ENCODE measurements at regions of chr17 and their contacts with region 1.

Region 1: DNA sequence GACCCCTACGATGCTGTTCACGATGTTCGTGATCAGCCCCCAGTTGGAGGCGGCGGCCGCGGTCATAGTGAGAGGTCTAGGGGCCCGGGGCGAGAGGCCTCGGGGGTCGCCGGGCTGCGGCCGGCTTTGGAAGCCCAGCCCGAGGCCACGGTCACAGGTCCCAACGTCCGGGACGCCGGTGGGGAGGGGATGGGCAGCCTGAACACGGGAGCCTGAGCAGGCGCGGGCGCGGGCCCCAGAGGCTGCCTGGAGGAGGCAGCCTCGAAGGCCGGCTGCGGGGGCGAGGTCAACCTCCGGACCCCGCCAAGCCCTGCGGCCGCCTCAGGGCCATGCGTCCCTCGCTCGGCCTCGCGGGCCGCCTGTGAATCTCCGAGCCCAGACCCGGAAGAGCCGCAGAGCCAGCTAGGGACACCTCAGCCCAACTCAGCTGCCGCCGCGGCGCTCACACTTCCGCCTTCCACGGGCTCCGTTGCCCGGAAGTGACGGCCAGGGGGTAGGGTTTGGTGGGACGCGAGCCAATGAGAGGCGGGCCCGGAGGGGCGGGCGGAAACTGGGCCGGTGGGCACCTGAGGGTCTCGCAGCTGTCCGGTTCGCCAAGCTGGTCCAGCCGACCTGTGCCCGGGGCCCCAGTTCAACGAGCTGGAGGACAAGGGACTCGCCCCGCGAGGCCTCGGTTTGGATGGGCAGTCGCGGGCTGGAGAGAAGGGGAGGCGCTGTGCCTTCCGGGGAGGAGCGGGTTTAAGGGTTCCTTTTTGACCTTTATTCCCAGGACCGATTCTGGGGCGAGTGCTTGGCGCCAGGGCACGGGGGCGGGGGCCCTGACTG is at the start of gene SLC38A10:
- DNase-seq: peak; percentile 68 to 93
- H3K4me3 ChIP-seq: peak within 1 kb of the TSS; percentile 87
- H3K27ac ChIP-seq: peak within 1 kb of the TSS; percentile 56
- H3K4me1 ChIP-seq: peaks cover 12% of the 10 kb centered on the region; the same call in 1 of the 2 replicates
- H3K27me3 ChIP-seq: no peaks in the 10 kb centered on the region
- CTCF ChIP-seq: no peak
- total RNA-seq, gene SLC38A10: 127 and 130 TPM in 2 replicates

Region 2: GRCh38 chr17:80263253-80264204 is 1031.5 kb before region 1 on chr17:
- CTCF ChIA-PET with region 1: no interaction called
- POLR2A ChIA-PET with region 1: no interaction called
- intact Hi-C with region 1: no loop called
- DNase-seq: no peak
- H3K4me3 ChIP-seq: no peak overlapping the region
- H3K27ac ChIP-seq: no peak overlapping the region
- H3K4me1 ChIP-seq: peaks cover 11% of the 10 kb centered on the region
- H3K27me3 ChIP-seq: no peaks in the 10 kb centered on the region
- CTCF ChIP-seq: no peak

Region 3: GRCh38 chr17:80408872-80409271 is 886.2 kb before region 1 on chr17:
- CTCF ChIA-PET with region 1: no interaction called
- POLR2A ChIA-PET with region 1: no interaction called
- intact Hi-C with region 1: no loop called
- DNase-seq: no peak
- H3K4me3 ChIP-seq: no peak overlapping the region
- H3K27ac ChIP-seq: no peak overlapping the region
- H3K4me1 ChIP-seq: 0 out of 2 replicates have a peak, but pooled peaks cover 3% of the 10 kb centered on the region
- H3K27me3 ChIP-seq: no peaks in the 10 kb centered on the region
- CTCF ChIP-seq: no peak

Region 4: DNA sequence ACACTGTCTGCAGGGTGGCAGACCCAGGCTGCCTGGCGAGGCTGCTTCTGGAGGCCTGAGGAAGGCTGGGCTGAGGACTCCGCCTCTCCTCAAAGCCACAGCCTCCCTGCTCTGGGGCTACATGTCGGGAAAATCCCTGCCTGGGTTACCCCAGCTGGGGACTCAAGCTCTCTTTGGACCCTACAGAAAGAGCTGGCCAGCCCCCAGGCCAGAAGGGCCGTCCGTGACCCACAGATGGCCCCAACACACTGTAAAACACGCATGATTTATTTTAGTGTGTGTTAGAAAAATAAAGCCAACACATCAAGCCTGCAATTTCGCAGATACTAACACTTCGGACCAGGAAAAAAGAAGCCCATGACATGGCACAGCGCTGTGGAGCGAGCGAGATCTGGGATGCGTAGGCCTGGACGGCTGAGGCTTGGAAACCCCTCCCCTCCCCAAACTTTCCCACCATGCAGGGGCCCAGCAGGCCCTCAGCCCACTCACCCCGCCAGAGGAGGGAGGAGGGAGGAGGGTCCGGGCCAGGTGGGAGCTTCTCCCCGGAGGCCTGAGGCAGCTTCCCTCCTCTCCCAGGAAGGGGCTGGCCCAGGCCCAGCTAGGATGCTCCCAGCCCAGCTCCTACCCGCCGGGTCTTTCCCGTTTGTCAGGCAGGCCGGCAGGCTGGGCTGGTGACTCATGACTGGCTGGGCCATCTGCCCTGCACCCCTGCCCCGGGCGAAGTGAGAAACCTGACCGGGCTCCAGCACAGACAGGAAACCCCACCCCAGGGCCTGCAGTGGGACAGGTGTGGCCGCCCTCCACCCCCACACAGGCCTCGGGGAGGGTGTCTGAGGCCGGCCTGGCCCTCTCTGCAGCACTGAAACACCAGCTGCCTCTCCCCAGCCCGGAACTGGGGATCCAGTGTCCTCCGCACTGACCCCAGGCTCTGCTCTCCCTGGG is 34.2 kb after region 1 on chr17:
- CTCF ChIA-PET with region 1: no interaction called
- POLR2A ChIA-PET with region 1: no interaction called
- intact Hi-C with region 1: loop called (anchors 1 kb)
- DNase-seq: peak; percentile 91 to 100
- H3K4me3 ChIP-seq: peak overlapping the region; percentile 57
- H3K27ac ChIP-seq: peak overlapping the region; percentile 90
- H3K4me1 ChIP-seq: peaks cover 54% of the 10 kb centered on the region
- H3K27me3 ChIP-seq: no peaks in the 10 kb centered on the region
- CTCF ChIP-seq: no peak

Region 5: GRCh38 chr17:81365148-81365600 is 70.1 kb after region 1 on chr17:
- CTCF ChIA-PET with region 1: interaction called, 3 read pairs
- POLR2A ChIA-PET with region 1: no interaction called
- intact Hi-C with region 1: loop called (anchors 1 kb)
- DNase-seq: peak; percentile 77 to 85
- H3K4me3 ChIP-seq: peak overlapping the region; percentile 60
- H3K27ac ChIP-seq: peak overlapping the region; percentile 76
- H3K4me1 ChIP-seq: peaks cover 24% of the 10 kb centered on the region
- H3K27me3 ChIP-seq: no peaks in the 10 kb centered on the region
- CTCF ChIP-seq: no peak

Region 6: DNA sequence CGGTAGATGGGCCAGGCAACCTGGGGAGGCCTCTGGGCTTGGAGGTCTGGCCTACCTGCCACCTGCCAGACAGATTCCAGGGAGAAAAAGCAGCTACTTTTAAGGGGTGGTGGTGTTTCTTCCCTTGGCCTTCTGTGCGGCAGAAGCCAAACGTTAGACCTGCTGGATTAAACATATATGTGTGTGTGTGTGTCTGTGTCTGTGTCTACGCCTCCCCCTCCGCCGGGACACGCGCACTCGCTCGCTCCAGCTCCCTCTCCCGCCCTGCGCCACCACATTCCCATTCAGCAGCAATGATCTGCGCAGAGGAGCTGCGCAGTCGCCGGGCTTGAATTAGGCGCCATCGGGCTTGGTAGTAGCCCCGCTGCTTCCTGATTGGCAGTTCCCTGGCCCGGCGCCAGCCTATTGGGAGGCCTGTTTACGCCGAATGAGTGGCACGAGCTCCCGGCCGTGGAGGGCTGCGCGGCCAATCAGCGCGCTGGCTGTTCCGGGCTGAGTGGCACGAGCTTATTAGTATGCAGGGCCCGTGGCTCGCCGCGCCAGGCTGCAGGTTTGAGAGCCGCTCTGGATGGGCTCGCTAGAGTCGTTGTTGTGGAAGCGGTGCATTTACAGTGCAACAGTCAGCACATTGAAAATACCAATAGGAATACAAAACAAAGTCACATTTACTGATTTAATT is 100.0 kb after region 1 on chr17 and contains the start of gene BAHCC1:
- CTCF ChIA-PET with region 1: interaction called, 4 read pairs
- POLR2A ChIA-PET with region 1: interaction called, 3 read pairs
- intact Hi-C with region 1: loop called (anchors 1 kb)
- DNase-seq: peak; percentile 96 to 100
- H3K4me3 ChIP-seq: peak within 1 kb of the TSS; percentile 78
- H3K27ac ChIP-seq: peak within 1 kb of the TSS; percentile 73
- H3K4me1 ChIP-seq: peaks cover 15% of the 10 kb centered on the region
- H3K27me3 ChIP-seq: no peaks in the 10 kb centered on the region
- CTCF ChIP-seq: no peak
- total RNA-seq, gene BAHCC1: 33.7 and 35.4 TPM in 2 replicates

Region 7: DNA sequence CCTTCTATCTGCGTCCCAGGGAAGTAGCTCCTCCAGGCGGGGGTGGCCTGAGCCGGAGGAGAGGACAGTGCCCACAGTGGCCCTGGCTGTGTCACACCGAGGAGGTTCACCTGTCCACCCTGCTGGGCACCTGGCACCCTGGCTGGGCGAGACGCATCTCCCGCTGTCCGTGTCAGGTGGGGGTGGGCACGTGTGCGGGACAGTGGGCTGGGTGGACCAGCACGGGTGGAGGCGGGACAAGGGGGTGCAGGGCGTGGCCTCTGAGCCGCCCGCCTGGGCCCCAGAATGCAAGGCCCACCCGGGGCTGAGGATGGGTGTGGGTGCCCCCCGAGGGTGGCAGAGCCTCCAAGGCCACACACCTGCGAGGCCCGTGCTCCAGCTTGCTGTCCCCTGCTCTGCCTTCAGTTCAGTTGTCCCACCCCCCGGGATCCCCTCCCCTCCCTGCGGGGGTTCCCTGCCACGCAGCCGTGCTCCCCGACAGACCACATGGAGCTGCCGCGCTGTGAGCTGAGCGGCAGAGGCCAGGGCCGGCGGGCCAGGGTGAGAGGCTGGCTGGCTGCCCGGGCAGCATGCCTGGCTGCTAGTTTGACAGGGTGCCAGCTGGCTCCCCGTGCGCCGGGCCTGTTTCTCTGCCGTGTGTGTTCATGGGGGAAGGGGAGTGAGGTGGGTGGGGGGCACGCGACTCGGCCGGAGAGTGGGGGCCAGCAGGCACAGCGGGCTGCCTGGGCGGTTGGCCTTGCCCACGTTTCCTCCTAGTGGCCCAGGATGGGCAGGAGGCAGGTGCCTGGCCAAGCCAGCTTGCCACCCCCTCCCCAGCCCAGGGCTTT is 134.1 kb after region 1 on chr17:
- CTCF ChIA-PET with region 1: interaction called, 12 read pairs
- POLR2A ChIA-PET with region 1: no interaction called
- intact Hi-C with region 1: no loop called
- DNase-seq: peak in 1 of 2 experiments; percentile 87
- H3K4me3 ChIP-seq: no peak overlapping the region
- H3K27ac ChIP-seq: no peak overlapping the region
- H3K4me1 ChIP-seq: peaks cover 8% of the 10 kb centered on the region; the same call in 1 of the 2 replicates
- H3K27me3 ChIP-seq: no peaks in the 10 kb centered on the region
- CTCF ChIP-seq: no peak

Region 8: GRCh38 chr17:81484195-81484979 is 189.3 kb after region 1 on chr17:
- CTCF ChIA-PET with region 1: interaction called, 9 read pairs
- POLR2A ChIA-PET with region 1: no interaction called
- intact Hi-C with region 1: loop called (anchors 1 kb)
- DNase-seq: peak in 1 of 2 experiments; percentile 90
- H3K4me3 ChIP-seq: peak overlapping the region; percentile 37; the same call in 1 of the 2 replicates
- H3K27ac ChIP-seq: no peak overlapping the region
- H3K4me1 ChIP-seq: no peaks in the 10 kb centered on the region
- H3K27me3 ChIP-seq: no peaks in the 10 kb centered on the region
- CTCF ChIP-seq: peak; percentile 82